ENCODE measurements at regions of chr4 and their contacts with region 1.

Region 1: DNA sequence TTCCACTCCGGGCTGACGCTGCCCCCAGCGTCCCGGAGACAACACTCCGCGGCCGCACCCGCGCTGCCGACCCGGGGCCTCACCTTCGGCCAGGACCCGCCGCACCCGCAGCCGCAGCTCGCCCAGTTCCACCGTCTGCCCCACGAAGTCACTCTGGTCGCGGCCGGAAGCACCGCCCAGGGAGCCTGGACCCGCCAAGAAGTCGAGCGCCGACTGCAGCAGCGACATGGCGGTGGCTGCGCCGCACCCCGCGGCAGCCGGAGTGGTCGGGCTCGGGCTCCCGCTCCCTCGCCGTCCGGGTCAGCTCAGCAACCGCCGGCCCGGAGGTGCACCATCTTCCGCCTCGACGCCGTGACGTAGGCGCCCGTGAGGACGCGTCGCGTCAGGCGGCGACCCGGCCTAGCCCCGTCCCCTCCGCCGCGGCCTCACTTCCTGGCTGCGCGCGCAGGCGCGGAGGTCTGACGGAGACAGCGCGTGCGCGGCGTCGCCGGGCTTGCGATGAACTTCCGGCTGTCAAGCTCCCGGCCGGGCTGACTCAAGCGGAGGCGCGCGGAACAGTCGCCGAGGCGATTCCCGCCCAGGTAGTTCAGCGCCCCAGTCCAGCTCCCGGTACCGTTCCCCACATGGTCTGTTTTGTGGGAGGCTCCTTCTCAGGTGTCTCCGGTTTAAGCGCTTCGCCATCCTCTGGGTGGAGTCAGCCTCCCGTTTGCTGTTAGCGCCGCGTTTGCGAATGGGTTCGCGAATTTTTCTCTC is at the starts of genes GAK and TMEM175:
- DNase-seq: peak; percentile 99
- total RNA-seq, gene GAK: 63.5 to 73.5 TPM
- total RNA-seq, gene TMEM175: 15.3 to 16.4 TPM

Region 2: GRCh38 chr4:915595-915994 is 16.5 kb before region 1 on chr4:
- intact Hi-C with region 1: no loop called
- DNase-seq: peak; percentile 42

Region 3: DNA sequence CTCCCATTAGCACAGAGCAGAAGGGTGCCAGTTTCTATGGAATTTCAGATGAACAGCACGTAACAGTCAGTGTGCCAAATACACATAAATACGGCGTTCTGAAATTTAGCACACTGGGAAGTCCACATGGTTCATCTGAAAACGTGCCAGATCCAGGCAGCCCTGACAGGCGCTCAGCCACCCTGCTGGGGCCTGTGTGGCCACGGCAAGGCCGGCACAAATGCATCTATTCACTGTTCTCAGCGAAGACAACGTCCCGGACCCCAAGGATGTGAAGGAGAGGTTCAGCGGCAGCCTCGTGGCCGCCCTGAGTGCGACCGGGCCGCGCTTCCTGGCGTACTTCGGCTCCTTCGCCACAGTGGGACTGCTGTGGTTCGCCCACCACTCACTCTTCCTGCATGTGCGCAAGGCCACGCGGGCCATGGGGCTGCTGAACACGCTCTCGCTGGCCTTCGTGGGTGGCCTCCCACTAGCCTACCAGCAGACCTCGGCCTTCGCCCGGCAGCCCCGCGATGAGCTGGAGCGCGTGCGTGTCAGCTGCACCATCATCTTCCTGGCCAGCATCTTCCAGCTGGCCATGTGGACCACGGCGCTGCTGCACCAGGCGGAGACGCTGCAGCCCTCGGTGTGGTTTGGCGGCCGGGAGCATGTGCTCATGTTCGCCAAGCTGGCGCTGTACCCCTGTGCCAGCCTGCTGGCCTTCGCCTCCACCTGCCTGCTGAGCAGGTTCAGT is 25.6 kb after region 1 on chr4:
- intact Hi-C with region 1: loop called in 1 of 2 experiments (anchors 1 kb)
- DNase-seq: peak; percentile 63

Region 4: GRCh38 chr4:1009542-1010394 is 77.6 kb after region 1 on chr4:
- intact Hi-C with region 1: loop called in 1 of 2 experiments (anchors 2 kb)
- DNase-seq: peak; percentile 90

Region 5: GRCh38 chr4:1448602-1449420 is 516.7 kb after region 1 on chr4:
- intact Hi-C with region 1: no loop called
- DNase-seq: peak; percentile 77